Adrenal gland (tissue), 19 donors: ENCODE measurements at regions of chr19 and their contacts with region 1.

Region 1: DNA sequence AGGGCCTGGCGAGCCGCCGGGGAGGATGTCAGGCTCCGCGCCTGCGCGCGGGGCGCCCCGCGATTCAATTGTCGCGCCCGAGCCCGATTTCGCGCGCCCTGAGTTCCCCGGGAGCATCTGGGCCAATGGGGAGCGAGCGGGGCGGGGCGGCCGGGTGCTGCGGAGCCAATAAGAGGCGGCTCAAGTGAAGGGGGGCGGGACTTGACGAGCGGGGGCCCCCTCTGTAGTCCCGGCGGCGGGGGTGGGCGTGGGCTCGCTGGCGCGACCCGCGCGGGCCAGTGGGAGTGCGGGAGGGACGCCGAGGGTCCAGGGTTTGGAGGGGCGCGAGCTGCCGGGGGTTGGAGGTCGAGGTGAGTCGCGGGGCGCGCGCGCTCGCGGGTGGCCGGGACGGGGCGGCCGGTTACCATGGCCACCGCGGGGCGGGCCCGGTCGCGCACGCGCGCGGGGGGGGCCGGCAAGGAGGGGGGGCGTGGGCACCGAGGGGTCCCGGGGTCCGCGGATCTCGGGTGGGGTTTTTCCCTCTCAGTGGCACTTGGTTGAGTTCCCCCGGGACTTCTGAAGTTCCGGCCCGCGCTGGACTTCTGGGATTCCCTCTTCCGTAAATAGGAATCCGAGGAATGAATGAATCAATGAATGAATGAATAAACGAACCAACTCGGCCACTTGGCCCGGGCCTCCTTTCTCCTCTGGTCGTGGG is 744 bp downstream of the UHRF1 start:
- DNase-seq: peak; percentile 88 to 94 (median 91)
- H3K4me3 ChIP-seq: peak overlapping the region in 3 of 4 donors; percentile 25 to 98 (median 35)
- H3K27ac ChIP-seq: no peak overlapping the region
- H3K4me1 ChIP-seq: peaks cover 12 to 23% of the 10 kb centered on the region in 2 donors
- H3K27me3 ChIP-seq: peaks cover 10% of the 10 kb centered on the region
- CTCF ChIP-seq: no peak
- POLR2A ChIP-seq: no peak

Region 2: DNA sequence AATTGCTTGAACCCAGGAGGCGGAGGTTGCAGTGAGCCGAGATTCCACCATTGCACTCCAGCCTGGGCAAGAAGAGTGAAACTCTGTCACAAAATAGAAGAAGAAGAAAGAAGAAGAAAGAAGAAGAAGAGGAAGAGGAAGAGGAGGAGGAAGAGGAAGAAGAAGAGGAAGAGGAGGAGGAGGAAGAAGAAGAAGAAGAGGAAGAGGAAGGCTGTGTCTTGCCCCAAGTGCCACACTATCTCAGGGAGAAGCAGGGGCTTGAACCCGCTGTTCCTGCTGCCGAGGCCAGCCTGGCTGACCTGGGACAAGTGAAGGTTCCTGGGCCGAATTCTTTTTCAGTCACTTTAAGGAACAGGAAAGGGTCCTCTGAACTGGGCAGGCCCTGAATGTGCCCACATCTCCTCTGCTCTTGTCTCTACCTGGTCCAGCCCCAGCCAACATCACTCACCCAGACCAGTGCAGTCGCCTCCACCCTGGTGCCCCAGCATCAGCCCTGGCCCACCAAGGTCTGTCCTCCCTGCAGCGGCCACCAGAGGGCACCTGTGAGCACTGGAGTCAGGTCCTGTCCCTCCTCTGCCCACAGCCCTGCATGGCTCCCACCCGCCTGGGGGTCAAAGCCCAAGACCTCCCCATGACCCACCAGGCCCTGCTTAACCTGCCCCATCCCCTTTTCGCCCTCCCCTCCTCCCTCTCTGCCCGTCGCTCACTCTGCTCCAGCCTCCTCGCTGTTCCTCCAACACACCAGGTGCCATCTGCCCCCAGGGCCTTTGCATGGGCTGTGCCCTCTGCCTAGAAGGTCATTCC is 98.5 kb before region 1 on chr19:
- intact Hi-C with region 1: loop called (anchors 2 to 5 kb)
- DNase-seq: peak; percentile 77 to 93 (median 86)
- H3K4me3 ChIP-seq: no peak overlapping the region
- H3K27ac ChIP-seq: peak overlapping the region in 1 of 5 donors; percentile 31
- H3K4me1 ChIP-seq: peaks cover 6 to 11% of the 10 kb centered on the region in 2 donors
- H3K27me3 ChIP-seq: no peaks in the 10 kb centered on the region
- CTCF ChIP-seq: peak; percentile 79 to 89 (median 82)
- POLR2A ChIP-seq: no peak

Region 3: GRCh38 chr19:4867534-4868285 is 42.3 kb before region 1 on chr19 and contains the start of gene PLIN3:
- intact Hi-C with region 1: loop called (anchors 2 to 5 kb)
- DNase-seq: peak; percentile 97 to 99 (median 98)
- H3K4me3 ChIP-seq: peak within 1 kb of the TSS in 3 of 4 donors; percentile 27 to 66 (median 63)
- H3K27ac ChIP-seq: peak within 1 kb of the TSS; percentile 21 to 91 (median 82)
- H3K4me1 ChIP-seq: peaks cover 9 to 32% of the 10 kb centered on the region in 2 donors
- H3K27me3 ChIP-seq: no peaks in the 10 kb centered on the region
- CTCF ChIP-seq: no peak
- POLR2A ChIP-seq: peak; percentile 24 to 90
- total RNA-seq, gene PLIN3: 64.9 to 181 (median 115) TPM

Region 4: GRCh38 chr19:4873930-4874329 is 36.1 kb before region 1 on chr19:
- intact Hi-C with region 1: loop called (anchors 2 to 5 kb)
- DNase-seq: no peak
- H3K4me3 ChIP-seq: no peak overlapping the region
- H3K27ac ChIP-seq: no peak overlapping the region
- H3K4me1 ChIP-seq: peaks cover 0 to 13% of the 10 kb centered on the region in 2 donors
- H3K27me3 ChIP-seq: no peaks in the 10 kb centered on the region
- CTCF ChIP-seq: no peak
- POLR2A ChIP-seq: no peak